ENCODE measurements at regions of chr6 and their contacts with region 1.

Region 1: DNA sequence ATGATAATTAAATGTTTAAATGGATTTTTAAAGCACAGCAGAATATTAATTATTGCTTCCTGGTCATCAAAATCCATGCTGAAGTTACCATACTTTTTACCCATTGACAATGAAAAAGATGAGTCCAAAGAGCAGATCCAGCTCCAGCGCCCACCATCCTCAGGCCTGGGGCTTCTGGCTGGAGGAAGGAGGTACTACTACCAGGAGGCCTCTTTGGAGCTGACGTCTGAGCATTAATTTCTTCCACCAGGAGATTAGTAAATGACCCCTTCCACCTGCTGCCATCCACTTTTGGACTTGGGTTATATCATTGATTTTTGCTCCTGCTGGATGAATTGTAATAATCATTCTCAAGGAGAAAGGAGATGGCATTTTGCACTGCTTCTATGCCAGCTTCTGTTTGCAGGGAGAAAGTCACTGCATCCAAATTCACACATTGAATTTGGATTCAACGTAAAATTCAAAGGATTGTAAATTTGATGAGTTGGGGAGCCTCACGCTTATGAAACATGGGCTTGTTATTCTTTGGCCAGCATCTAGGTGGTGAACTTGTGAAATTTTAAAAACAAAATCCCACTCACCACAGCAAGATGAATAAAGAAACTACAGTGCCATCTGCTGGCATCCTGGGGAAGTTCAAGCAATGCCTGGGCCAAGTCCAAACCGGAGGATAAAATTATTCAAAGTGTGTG is 121.8 kb downstream of the SASH1 start:
- DNase-seq: peak; percentile 79
- ATAC-seq: peak; percentile 59
- H3K4me3 ChIP-seq: no peak overlapping the region
- H3K27ac ChIP-seq: peak overlapping the region; percentile 5; the same call in 1 of the 2 replicates
- H3K4me1 ChIP-seq: peaks cover 19% of the 10 kb centered on the region
- H3K27me3 ChIP-seq: no peaks in the 10 kb centered on the region
- CTCF ChIP-seq: peak; percentile 98
- POLR2A ChIP-seq: no peak
- RAD21 ChIP-seq: peak; percentile 91

Region 2: GRCh38 chr6:147390909-147391536 is 1073.4 kb before region 1 on chr6:
- CTCF ChIA-PET with region 1: no interaction called
- POLR2A ChIA-PET with region 1: no interaction called
- dilution Hi-C with region 1: no loop called
- in situ Hi-C with region 1: no loop called
- intact Hi-C with region 1: loop called (anchors 1 kb)
- DNase-seq: peak; percentile 39
- ATAC-seq: peak; percentile 54; the same call in 1 of the 2 replicates
- H3K4me3 ChIP-seq: no peak overlapping the region
- H3K27ac ChIP-seq: no peak overlapping the region
- H3K4me1 ChIP-seq: peaks cover 3% of the 10 kb centered on the region; the same call in 1 of the 2 replicates
- H3K27me3 ChIP-seq: no peaks in the 10 kb centered on the region
- CTCF ChIP-seq: peak; percentile 52
- POLR2A ChIP-seq: no peak
- RAD21 ChIP-seq: peak; percentile 57

Region 3: DNA sequence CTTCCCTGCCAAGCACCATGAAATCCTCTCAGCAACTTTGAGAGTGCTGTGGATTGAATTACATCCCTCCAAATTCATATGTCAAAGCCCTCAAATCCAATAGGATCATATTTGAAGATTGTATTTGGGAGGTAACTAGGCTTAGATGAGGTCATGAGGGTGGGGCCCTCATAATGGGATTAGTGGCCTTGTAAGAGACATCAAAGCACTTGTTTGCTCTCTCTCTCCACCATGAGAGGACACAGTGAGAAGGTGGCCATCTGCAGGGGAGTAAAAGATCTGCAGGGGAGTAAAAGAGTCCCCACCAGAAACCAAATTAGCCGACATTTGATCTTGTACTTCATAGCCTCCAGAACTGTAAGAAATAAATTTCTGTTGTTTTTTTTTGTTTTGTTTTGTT is 657.8 kb before region 1 on chr6:
- CTCF ChIA-PET with region 1: no interaction called
- POLR2A ChIA-PET with region 1: no interaction called
- dilution Hi-C with region 1: no loop called
- in situ Hi-C with region 1: no loop called
- intact Hi-C with region 1: no loop called
- DNase-seq: no peak
- ATAC-seq: no peak
- H3K4me3 ChIP-seq: no peak overlapping the region
- H3K27ac ChIP-seq: no peak overlapping the region
- H3K4me1 ChIP-seq: peaks cover 4% of the 10 kb centered on the region; the same call in 1 of the 2 replicates
- H3K27me3 ChIP-seq: no peaks in the 10 kb centered on the region
- CTCF ChIP-seq: no peak
- POLR2A ChIP-seq: no peak
- RAD21 ChIP-seq: no peak

Region 4: GRCh38 chr6:147909640-147910039 is 554.8 kb before region 1 on chr6:
- CTCF ChIA-PET with region 1: no interaction called
- POLR2A ChIA-PET with region 1: no interaction called
- dilution Hi-C with region 1: no loop called
- in situ Hi-C with region 1: no loop called
- intact Hi-C with region 1: no loop called
- DNase-seq: peak; percentile 39
- ATAC-seq: peak; percentile 81
- H3K4me3 ChIP-seq: no peak overlapping the region
- H3K27ac ChIP-seq: no peak overlapping the region
- H3K4me1 ChIP-seq: no peaks in the 10 kb centered on the region
- H3K27me3 ChIP-seq: no peaks in the 10 kb centered on the region
- CTCF ChIP-seq: no peak
- POLR2A ChIP-seq: no peak
- RAD21 ChIP-seq: no peak

Region 5: DNA sequence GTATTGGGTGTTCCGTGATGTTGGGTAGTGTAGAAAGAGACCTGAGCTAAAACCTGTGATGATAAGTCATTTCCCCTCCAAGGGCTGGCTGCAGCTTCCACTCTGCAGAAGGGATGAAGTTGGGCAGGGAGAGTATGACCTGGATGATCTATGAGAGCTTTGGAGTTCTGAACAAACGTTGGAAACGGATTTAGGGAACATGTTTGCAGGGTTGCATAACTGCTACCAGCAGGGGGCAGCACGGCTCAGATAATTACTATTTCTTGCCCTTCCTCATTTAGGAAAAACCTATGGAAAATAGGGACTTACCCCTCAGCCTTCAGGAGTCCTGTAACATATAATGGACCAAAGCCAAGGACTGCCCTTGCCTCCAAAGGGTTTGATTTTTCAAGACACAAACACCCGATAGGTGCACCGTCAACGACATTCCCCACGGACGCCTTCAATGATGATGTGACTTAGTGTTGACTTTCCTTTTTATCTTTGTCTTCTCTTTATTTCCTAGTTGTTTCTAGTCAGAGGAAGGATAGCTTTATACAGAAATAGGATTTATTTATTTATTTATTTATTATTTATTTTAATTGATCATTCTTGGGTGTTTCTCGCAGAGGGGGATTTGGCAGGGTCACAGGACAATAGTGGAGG is 286.8 kb before region 1 on chr6:
- CTCF ChIA-PET with region 1: interaction called, 3 read pairs
- POLR2A ChIA-PET with region 1: interaction called, 3 read pairs
- dilution Hi-C with region 1: no loop called
- in situ Hi-C with region 1: no loop called
- intact Hi-C with region 1: loop called (anchors 1 kb)
- DNase-seq: peak; percentile 68
- ATAC-seq: peak; percentile 59
- H3K4me3 ChIP-seq: no peak overlapping the region
- H3K27ac ChIP-seq: no peak overlapping the region
- H3K4me1 ChIP-seq: no peaks in the 10 kb centered on the region
- H3K27me3 ChIP-seq: no peaks in the 10 kb centered on the region
- CTCF ChIP-seq: peak; percentile 77
- POLR2A ChIP-seq: no peak
- RAD21 ChIP-seq: peak; percentile 82

Region 6: GRCh38 chr6:148250975-148251685 is 213.3 kb before region 1 on chr6:
- CTCF ChIA-PET with region 1: interaction called, 4 read pairs
- POLR2A ChIA-PET with region 1: no interaction called
- dilution Hi-C with region 1: no loop called
- in situ Hi-C with region 1: no loop called
- intact Hi-C with region 1: loop called (anchors 1 kb)
- DNase-seq: peak; percentile 80
- ATAC-seq: peak; percentile 86
- H3K4me3 ChIP-seq: no peak overlapping the region
- H3K27ac ChIP-seq: no peak overlapping the region
- H3K4me1 ChIP-seq: peaks cover 2% of the 10 kb centered on the region; the same call in 1 of the 2 replicates
- H3K27me3 ChIP-seq: no peaks in the 10 kb centered on the region
- CTCF ChIP-seq: peak; percentile 62
- POLR2A ChIP-seq: no peak
- RAD21 ChIP-seq: peak; percentile 82

Region 7: DNA sequence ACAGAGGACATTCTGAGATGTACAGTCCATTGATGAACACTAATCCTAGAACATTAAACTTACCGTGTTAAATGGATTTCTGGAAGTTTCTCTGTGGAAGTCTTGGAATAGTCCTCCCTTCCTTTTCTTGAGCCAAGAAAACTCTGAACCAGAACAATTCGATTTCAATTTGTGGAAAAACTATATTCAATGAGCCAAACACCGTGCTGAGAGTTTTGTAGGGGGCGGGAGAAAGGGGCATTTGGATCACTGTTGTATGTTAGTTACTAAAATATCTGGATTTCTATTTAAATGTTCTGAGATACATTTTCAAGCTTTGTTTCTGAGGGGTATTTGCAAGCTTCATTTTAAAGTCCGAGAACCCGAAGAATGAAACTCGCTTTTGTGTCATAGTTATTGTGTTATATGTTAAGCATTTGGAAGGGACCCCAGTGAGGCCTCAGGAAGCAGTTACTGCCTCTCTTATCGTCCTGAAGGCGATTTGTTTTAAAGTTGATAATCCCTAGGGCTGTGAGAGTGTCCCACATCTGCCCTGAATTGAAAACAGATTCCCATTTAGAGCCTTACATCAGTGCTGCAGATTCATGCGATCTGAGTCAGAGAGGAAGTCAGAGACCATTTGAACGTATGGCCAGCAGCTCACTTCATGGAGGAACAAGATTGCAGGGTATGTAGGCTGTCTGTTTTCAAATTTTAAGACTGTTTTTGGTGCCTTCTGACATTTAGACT is 192.6 kb before region 1 on chr6:
- CTCF ChIA-PET with region 1: no interaction called
- POLR2A ChIA-PET with region 1: no interaction called
- dilution Hi-C with region 1: no loop called
- in situ Hi-C with region 1: no loop called
- intact Hi-C with region 1: loop called (anchors 1 kb)
- DNase-seq: peak; percentile 99
- ATAC-seq: peak; percentile 73
- H3K4me3 ChIP-seq: peak overlapping the region; percentile 4; the same call in 1 of the 2 replicates
- H3K27ac ChIP-seq: peak overlapping the region; percentile 52
- H3K4me1 ChIP-seq: peaks cover 17% of the 10 kb centered on the region
- H3K27me3 ChIP-seq: no peaks in the 10 kb centered on the region
- CTCF ChIP-seq: no peak
- POLR2A ChIP-seq: peak; percentile 81
- RAD21 ChIP-seq: 0 out of 2 replicates have a peak, but pooled peaks have one; percentile 17

Region 8: GRCh38 chr6:148342357-148343046 is 122.0 kb before region 1 on chr6 and contains the start of gene SASH1:
- CTCF ChIA-PET with region 1: no interaction called
- POLR2A ChIA-PET with region 1: interaction called, 3 read pairs
- dilution Hi-C with region 1: no loop called
- in situ Hi-C with region 1: no loop called
- intact Hi-C with region 1: loop called (anchors 2 kb)
- DNase-seq: peak; percentile 77
- ATAC-seq: peak; percentile 87
- H3K4me3 ChIP-seq: peak within 1 kb of the TSS; percentile 62
- H3K27ac ChIP-seq: peak within 1 kb of the TSS; percentile 95
- H3K4me1 ChIP-seq: peaks cover 4% of the 10 kb centered on the region; the same call in 1 of the 2 replicates
- H3K27me3 ChIP-seq: no peaks in the 10 kb centered on the region
- CTCF ChIP-seq: no peak
- POLR2A ChIP-seq: no peak
- RAD21 ChIP-seq: no peak
- total RNA-seq, gene SASH1: 16.5 and 20.3 TPM in 2 replicates

Region 9: DNA sequence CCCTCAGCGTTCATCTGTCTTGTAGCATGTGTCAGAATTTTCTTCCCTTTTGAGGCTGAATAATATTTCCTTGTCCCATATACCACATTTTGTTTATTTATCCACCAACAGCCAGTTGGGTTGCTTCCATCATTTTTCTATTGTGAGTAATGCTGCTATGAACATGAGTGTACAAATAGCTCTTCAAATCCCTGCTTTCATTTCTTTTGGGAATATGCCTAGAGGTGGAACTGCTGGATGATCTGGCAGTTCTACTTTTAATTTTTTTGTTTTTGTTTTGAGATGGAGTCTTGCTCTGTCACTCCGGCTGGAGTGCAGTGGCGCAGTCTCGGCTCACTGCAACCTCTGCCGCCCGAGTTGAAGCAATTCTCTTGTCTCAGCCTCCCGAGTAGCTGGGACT is 57.1 kb before region 1 on chr6:
- CTCF ChIA-PET with region 1: no interaction called
- POLR2A ChIA-PET with region 1: no interaction called
- dilution Hi-C with region 1: no loop called
- in situ Hi-C with region 1: no loop called
- intact Hi-C with region 1: loop called (anchors 5 kb)
- DNase-seq: peak; percentile 97
- ATAC-seq: peak; percentile 89
- H3K4me3 ChIP-seq: no peak overlapping the region
- H3K27ac ChIP-seq: peak overlapping the region; percentile 52; the same call in 1 of the 2 replicates
- H3K4me1 ChIP-seq: peaks cover 10% of the 10 kb centered on the region
- H3K27me3 ChIP-seq: no peaks in the 10 kb centered on the region
- CTCF ChIP-seq: no peak
- POLR2A ChIP-seq: no peak
- RAD21 ChIP-seq: no peak

Region 10: DNA sequence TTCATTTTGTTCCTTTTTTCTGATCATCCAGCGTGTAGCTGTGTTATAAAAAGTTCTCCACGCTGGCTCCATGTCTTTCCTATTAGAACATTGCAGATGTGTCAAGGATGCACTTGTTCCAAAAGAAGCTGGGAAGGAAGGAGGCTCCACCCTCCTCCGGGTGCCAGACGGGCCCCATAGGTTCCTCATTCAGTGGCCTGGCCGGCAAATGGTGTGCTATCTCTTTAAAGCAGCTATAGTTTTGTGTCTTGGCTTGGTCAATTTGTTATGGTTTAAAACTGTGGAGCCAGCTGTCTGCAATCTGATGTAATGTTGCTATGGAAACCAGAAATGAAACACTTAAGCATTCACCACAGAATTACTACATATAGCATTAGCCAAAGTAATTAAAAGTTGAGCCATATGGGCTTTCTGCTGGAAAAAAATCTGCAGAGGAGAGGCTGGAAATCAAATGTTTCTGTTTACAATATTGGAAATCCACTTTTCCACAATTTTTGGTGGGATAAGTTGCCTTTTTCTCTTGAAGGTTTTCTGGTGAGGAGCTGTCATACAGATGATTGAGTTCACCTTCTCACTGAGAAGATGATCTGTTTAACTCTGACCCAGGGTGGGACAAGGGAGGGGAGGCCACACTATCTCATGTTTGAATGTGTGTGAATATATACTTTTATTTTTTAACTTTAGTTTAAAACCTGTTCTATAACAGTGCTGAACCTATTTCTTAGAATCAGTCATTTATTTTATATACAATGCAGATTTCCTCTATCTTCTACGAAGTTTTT is 45.5 kb after region 1 on chr6:
- CTCF ChIA-PET with region 1: no interaction called
- POLR2A ChIA-PET with region 1: no interaction called
- dilution Hi-C with region 1: no loop called
- in situ Hi-C with region 1: no loop called
- intact Hi-C with region 1: no loop called
- DNase-seq: peak; percentile 99
- ATAC-seq: peak; percentile 71
- H3K4me3 ChIP-seq: peak overlapping the region; percentile 60
- H3K27ac ChIP-seq: peak overlapping the region; percentile 98
- H3K4me1 ChIP-seq: peaks cover 19% of the 10 kb centered on the region
- H3K27me3 ChIP-seq: no peaks in the 10 kb centered on the region
- CTCF ChIP-seq: no peak
- POLR2A ChIP-seq: peak; percentile 68; the same call in 1 of the 2 replicates
- RAD21 ChIP-seq: no peak